Tibial artery (tissue), 4 donors: ENCODE measurements at regions of chr15 and their contacts with region 1.

Region 1: DNA sequence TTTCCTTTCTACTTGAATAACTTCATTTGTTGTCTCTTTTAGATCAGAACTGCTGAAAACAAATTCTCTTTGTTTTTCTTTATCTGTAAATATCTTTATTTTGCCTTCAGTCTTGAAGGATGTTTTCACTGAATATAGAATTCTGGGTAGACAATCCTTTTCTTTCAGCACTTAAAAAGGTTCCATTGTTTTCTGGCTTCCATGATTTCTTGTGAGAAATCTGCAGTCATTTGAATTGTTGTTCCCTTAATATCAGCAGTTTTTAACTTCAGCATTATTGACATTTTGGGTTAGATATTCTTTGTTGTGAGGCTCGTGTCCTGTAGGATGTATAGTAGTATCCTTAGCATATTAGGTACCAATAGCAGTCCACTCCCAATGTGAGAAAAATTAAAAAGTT is 65.8 kb downstream of the SV2B start:
- DNase-seq: no peak
- H3K4me3 ChIP-seq: no peak overlapping the region
- H3K27ac ChIP-seq: no peak overlapping the region
- H3K4me1 ChIP-seq: no peaks in the 10 kb centered on the region
- H3K27me3 ChIP-seq: no peaks in the 10 kb centered on the region
- CTCF ChIP-seq: no peak

Region 2: DNA sequence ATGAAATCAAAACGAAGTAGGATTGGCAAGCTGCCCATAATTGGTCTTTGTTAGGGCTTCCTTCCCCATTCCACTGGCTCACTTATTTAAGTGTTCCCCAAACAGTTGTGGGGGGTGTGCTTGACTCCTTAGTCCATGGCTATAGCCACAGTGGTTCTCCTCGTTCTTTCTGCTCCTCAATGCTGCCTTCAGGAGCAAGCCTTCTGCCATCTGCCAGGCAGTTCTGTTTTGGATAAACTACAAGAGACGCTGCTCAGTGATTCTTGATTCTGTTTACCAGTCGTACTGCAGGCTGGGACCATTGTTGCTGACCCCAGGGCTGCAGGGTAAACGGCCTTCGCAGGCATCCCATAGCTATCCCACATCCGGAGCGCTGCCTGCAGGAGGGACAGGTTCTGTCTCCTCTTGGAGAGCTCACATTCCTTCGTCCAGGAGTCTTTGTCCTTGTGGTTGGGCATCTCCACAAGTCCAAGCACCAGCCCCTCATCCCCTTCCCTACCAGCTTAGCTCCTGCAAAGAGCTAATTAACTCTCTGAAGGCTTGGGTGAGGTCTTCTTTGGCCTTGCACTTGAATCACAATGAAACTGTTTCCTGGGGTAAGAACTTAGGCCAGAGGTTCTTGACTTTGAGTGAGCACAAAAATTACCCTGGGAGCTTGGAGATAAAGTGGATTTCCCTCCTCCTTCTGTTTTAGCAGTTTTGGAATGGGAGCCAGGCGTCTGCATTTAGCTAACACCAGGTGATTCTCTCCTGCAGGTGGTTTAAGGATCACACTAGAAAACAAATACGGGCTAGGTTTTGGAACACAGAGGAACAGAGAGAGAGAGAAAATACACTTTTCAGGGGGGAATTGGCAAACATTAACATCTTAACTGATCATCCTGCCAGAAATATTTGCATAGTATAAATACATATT is 49.1 kb after region 1 on chr15:
- intact Hi-C with region 1: loop called (anchors 1 kb)
- DNase-seq: no peak
- H3K4me3 ChIP-seq: no peak overlapping the region
- H3K27ac ChIP-seq: no peak overlapping the region
- H3K4me1 ChIP-seq: no peaks in the 10 kb centered on the region
- H3K27me3 ChIP-seq: peaks cover 0 to 4% of the 10 kb centered on the region in 2 donors
- CTCF ChIP-seq: no peak